Common myeloid progenitor, CD34-positive (primary cell): ENCODE measurements at regions of chr5 and their contacts with region 1.

Region 1: GRCh38 chr5:38441453-38442246 is 114.8 kb downstream of the LIFR start:
- DNase-seq: peak; percentile 89 to 92 (median 91)
- H3K4me3 ChIP-seq: no peak overlapping the region
- H3K27ac ChIP-seq: no peak overlapping the region
- H3K4me1 ChIP-seq: no peaks in the 10 kb centered on the region
- H3K27me3 ChIP-seq: peaks cover 4 to 90% (median 34%) of the 10 kb centered on the region in 5 experiments

Region 2: DNA sequence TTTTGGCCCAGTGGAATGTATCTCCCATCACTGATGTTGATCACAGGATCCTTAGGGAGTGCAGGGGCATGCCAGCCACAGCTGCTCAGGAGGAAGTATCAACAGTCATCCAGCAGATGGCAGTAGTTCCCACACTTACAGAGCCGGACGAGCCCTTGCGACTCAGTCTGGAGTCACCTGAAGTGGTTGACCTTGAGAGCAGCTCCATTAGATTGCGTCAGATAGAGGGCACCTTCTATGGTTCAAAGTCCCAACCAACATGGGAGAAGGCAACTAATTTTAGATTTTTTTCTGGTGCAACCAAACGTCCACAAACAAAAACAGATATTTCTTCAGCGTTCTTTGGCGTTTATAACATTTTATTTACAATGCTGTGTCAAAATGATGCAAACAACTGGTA is 58.8 kb before region 1 on chr5:
- CTCF ChIA-PET with region 1: no interaction called
- POLR2A ChIA-PET with region 1: no interaction called
- DNase-seq: peak; percentile 47 to 63 (median 61)
- H3K4me3 ChIP-seq: no peak overlapping the region
- H3K27ac ChIP-seq: no peak overlapping the region
- H3K4me1 ChIP-seq: no peaks in the 10 kb centered on the region
- H3K27me3 ChIP-seq: peaks cover 11 to 60% (median 22%) of the 10 kb centered on the region in 5 experiments

Region 3: GRCh38 chr5:38420691-38421390 is 20.8 kb before region 1 on chr5:
- CTCF ChIA-PET with region 1: interaction called, 19 read pairs
- POLR2A ChIA-PET with region 1: interaction called, 3 read pairs
- DNase-seq: peak; percentile 36 to 62 (median 42)
- H3K4me3 ChIP-seq: no peak overlapping the region
- H3K27ac ChIP-seq: no peak overlapping the region
- H3K4me1 ChIP-seq: no peaks in the 10 kb centered on the region
- H3K27me3 ChIP-seq: peaks cover 0 to 71% (median 13%) of the 10 kb centered on the region in 5 experiments

Region 4: GRCh38 chr5:38453506-38453905 is 11.9 kb after region 1 on chr5:
- CTCF ChIA-PET with region 1: interaction called, 22 read pairs
- POLR2A ChIA-PET with region 1: no interaction called
- DNase-seq: peak; percentile 91 to 98 (median 98)
- H3K4me3 ChIP-seq: no peak overlapping the region
- H3K27ac ChIP-seq: no peak overlapping the region
- H3K4me1 ChIP-seq: peaks cover 0 to 15% (median 11%) of the 10 kb centered on the region in 4 experiments
- H3K27me3 ChIP-seq: peaks cover 6 to 93% (median 57%) of the 10 kb centered on the region in 5 experiments

Region 5: DNA sequence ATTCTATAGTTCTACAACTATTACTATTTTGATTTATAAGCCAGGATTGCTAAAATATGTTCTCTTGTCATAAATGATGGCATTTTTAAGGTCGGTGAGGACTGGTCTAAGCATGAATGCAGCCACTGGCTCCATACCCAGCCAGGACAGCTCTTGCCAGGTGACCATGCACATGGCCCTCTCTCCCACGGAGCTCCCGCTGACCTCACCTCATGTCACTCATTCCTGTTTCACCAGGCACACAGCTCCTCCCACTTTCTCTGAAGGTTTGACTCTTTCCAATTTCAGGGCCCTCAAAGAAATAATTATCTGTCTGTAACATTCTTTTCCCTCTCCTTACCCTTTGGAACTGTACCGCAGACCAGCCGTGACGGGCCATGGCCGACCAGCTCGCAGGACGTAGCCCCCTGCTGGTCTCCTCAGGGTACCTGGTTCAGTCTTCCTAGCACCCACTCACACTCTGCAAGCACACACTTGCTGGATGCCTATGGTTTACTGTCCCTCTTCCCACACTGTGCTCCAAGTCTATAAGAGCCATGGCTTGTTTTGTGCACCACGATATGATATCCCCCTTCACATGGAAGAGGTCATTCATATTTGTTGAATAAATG is 42.2 kb after region 1 on chr5:
- CTCF ChIA-PET with region 1: interaction called, 11 read pairs
- POLR2A ChIA-PET with region 1: no interaction called
- DNase-seq: peak in 1 of 3 donors; percentile 6
- H3K4me3 ChIP-seq: no peak overlapping the region
- H3K27ac ChIP-seq: no peak overlapping the region
- H3K4me1 ChIP-seq: no peaks in the 10 kb centered on the region
- H3K27me3 ChIP-seq: peaks cover 12 to 84% (median 49%) of the 10 kb centered on the region in 5 experiments

Region 6: GRCh38 chr5:38551030-38552017 is 109.7 kb after region 1 on chr5:
- CTCF ChIA-PET with region 1: interaction called, 31 read pairs
- POLR2A ChIA-PET with region 1: no interaction called
- DNase-seq: peak; percentile 29 to 46 (median 39)
- H3K4me3 ChIP-seq: no peak overlapping the region
- H3K27ac ChIP-seq: no peak overlapping the region
- H3K4me1 ChIP-seq: peaks cover 0 to 7% (median 6%) of the 10 kb centered on the region in 4 experiments
- H3K27me3 ChIP-seq: peaks cover 21 to 83% (median 34%) of the 10 kb centered on the region in 5 experiments

Region 7: DNA sequence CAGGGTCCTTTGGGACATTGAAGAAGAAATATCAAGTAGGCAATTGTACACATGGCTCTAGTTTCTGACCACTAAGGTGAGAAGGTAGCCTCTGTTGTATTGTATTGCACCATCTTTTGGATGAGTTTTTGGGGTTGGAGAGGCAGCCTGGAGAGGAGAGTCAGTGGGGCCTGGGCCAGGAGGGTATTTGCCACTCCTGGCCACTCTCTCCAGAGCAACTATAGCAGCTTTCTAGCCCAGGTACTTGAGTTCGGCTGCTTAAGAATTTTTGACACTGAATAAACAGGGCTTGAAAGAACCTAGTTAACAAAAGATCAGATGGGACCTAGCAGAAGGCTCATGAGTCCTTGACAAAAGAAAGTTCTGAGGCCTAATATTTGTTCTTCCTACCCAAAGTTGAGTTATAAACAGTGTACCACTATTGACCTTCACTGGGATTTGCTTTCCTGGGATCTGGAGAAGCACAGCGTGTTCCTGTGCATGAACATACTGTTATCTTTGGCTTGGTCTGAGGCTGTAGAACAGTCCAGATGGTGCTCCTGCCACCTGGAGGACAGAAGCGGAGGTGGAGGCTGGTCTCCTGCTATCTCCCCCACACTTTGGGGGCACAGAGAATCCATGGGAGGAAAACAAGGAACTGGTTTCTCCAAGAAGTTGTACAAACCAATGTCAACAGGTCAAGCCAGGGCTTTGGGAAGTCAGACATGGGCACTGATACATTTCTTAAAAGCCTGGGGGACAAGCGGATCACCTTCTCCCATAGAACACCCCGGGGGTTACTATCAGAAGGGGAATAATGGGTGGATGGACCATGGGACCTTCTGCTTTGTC is 225.2 kb after region 1 on chr5:
- CTCF ChIA-PET with region 1: interaction called, 12 read pairs
- POLR2A ChIA-PET with region 1: no interaction called
- DNase-seq: peak in 1 of 3 donors; percentile 8
- H3K4me3 ChIP-seq: no peak overlapping the region
- H3K27ac ChIP-seq: no peak overlapping the region
- H3K4me1 ChIP-seq: no peaks in the 10 kb centered on the region
- H3K27me3 ChIP-seq: peaks cover 2 to 61% (median 6%) of the 10 kb centered on the region in 5 experiments

Region 8: GRCh38 chr5:38809388-38810359 is 368.0 kb after region 1 on chr5:
- CTCF ChIA-PET with region 1: interaction called, 32 read pairs
- POLR2A ChIA-PET with region 1: no interaction called
- DNase-seq: peak; percentile 73 to 86 (median 82)
- H3K4me3 ChIP-seq: no peak overlapping the region
- H3K27ac ChIP-seq: no peak overlapping the region
- H3K4me1 ChIP-seq: no peaks in the 10 kb centered on the region
- H3K27me3 ChIP-seq: peaks cover 3 to 63% (median 18%) of the 10 kb centered on the region in 5 experiments